ENCODE measurements at regions of chr6 and their contacts with region 1.

Region 1: GRCh38 chr6:79570129-79571029 is 33.1 kb upstream of the LCA5 start:
- DNase-seq: no peak
- ATAC-seq: peak; percentile 82

Region 2: DNA sequence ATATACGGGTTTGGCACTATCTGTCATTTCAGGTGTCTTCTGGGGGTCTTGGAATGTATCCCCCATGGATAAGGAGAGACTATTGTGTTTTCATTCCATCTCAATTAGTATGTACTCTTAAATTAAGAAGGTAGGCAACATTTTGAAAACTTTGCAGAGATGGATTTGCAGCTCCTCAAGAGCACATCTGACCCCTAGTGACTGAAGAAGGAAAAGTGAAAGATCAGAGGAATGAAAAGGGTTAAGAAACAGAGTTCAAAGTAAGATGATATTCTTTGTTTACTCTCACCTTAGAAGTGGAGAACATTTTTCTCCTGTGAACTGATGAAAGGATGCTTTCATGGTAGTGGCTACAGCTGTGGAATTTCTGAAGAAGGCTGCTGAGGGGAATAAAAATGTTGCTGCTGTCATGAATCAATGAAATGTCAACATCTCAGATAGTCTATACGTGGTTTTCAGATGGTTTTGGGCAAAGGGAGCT is 102.3 kb after region 1 on chr6:
- intact Hi-C with region 1: loop called (anchors 5 kb)
- DNase-seq: no peak
- ATAC-seq: peak; percentile 41

Region 3: GRCh38 chr6:79694625-79695343 is 124.4 kb after region 1 on chr6:
- intact Hi-C with region 1: no loop called
- DNase-seq: no peak
- ATAC-seq: no peak

Region 4: GRCh38 chr6:79719248-79719960 is 149.0 kb after region 1 on chr6:
- intact Hi-C with region 1: loop called (anchors 5 kb)
- DNase-seq: no peak
- ATAC-seq: peak; percentile 55